Activated naive CD4-positive, alpha-beta T cell treated with anti-CD3 and anti-CD28 coated beads, Interleukin-2, amount 10 ng/mL, durations not matched to agents 7 days and 5 days (primary cell): ENCODE measurements at regions of chr2 and their contacts with region 1.

Region 1: DNA sequence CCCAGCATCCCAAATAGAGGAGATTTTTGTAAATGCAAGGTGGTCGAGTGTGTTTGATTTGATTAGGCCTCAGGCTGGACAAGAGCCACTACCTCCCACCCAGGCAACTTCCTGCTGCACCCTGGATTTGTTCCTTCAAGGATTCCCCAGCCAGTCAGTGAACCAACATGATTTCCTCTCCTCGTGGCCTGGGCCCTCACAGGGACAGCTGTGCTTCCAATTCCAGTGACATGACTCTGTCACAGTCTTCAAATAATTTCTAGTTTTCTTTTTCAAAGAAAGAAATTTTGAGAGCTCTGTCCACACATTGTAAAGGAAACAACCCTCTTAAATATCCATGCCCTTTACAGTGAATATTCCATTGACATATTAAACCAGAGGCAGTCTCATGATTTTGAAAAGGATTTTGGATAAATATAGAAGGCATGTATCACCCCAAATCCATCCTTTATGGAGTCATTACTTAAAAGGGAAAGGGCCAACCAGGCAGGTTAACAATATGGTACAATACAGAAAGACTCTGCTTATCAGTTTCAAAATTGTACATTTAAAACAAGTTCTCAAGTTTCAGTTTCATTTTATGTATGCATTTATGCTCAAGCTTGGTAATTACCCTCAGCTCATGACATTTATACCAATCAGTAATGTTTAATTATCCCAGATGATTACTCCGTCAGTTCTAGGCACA is 121.3 kb upstream of the FOSL2 start:
- DNase-seq: no peak
- H3K4me3 Mint-ChIP-seq: no peak overlapping the region
- H3K27ac Mint-ChIP-seq: peak overlapping the region; percentile 62
- H3K4me1 Mint-ChIP-seq: peaks cover 66% of the 10 kb centered on the region
- H3K27me3 Mint-ChIP-seq: peaks cover 3% of the 10 kb centered on the region

Region 2: GRCh38 chr2:28250006-28250405 is 21.4 kb before region 1 on chr2:
- CTCF ChIA-PET with region 1: interaction called, 13 read pairs
- DNase-seq: no peak
- H3K4me3 Mint-ChIP-seq: no peak overlapping the region
- H3K27ac Mint-ChIP-seq: peak overlapping the region; percentile 1
- H3K4me1 Mint-ChIP-seq: peaks cover 71% of the 10 kb centered on the region
- H3K27me3 Mint-ChIP-seq: no peaks in the 10 kb centered on the region